CD4-positive, alpha-beta T cell (primary cell): ENCODE measurements at regions of chr16 and their contacts with region 1.

Region 1: GRCh38 chr16:23595951-23596720 is at the start of gene NDUFAB1:
- DNase-seq: peak; percentile 81 to 95 (median 90)
- ATAC-seq: peak; percentile 99
- H3K4me3 ChIP-seq: peak within 1 kb of the TSS; percentile 76
- H3K4me3 Mint-ChIP-seq: peak within 1 kb of the TSS; percentile 87
- H3K27ac ChIP-seq: peak within 1 kb of the TSS; percentile 54 to 59
- H3K27ac Mint-ChIP-seq: peak within 1 kb of the TSS; percentile 73
- H3K4me1 ChIP-seq: peaks cover 33% of the 10 kb centered on the region
- H3K4me1 Mint-ChIP-seq: peaks cover 35% of the 10 kb centered on the region
- H3K27me3 ChIP-seq: no peaks in the 10 kb centered on the region
- H3K27me3 Mint-ChIP-seq: no peaks in the 10 kb centered on the region
- CTCF ChIP-seq: peak; percentile 99
- total RNA-seq, gene NDUFAB1: 23.0 to 28.3 TPM

Region 2: GRCh38 chr16:23510164-23510914 is 85.8 kb before region 1 on chr16 and contains the start of gene GGA2:
- CTCF ChIA-PET with region 1: interaction called, 3 read pairs
- POLR2A ChIA-PET with region 1: no interaction called
- intact Hi-C with region 1: loop called in 1 of 2 experiments (anchors 2 kb)
- DNase-seq: peak; percentile 65 to 90 (median 74)
- ATAC-seq: peak; percentile 86
- H3K4me3 ChIP-seq: peak within 1 kb of the TSS; percentile 66
- H3K4me3 Mint-ChIP-seq: peak within 1 kb of the TSS; percentile 99
- H3K27ac ChIP-seq: peak within 1 kb of the TSS in 1 of 2 donors; percentile 13
- H3K27ac Mint-ChIP-seq: peak within 1 kb of the TSS; percentile 84
- H3K4me1 ChIP-seq: peaks cover 63% of the 10 kb centered on the region
- H3K4me1 Mint-ChIP-seq: peaks cover 58% of the 10 kb centered on the region
- H3K27me3 ChIP-seq: no peaks in the 10 kb centered on the region
- H3K27me3 Mint-ChIP-seq: no peaks in the 10 kb centered on the region
- CTCF ChIP-seq: no peak
- total RNA-seq, gene GGA2: 96.5 to 96.9 TPM

Region 3: GRCh38 chr16:23567602-23568001 is 28.5 kb before region 1 on chr16:
- CTCF ChIA-PET with region 1: no interaction called
- POLR2A ChIA-PET with region 1: no interaction called
- intact Hi-C with region 1: no loop called
- DNase-seq: no peak
- ATAC-seq: no peak
- H3K4me3 ChIP-seq: no peak overlapping the region
- H3K4me3 Mint-ChIP-seq: no peak overlapping the region
- H3K27ac ChIP-seq: no peak overlapping the region
- H3K27ac Mint-ChIP-seq: no peak overlapping the region
- H3K4me1 ChIP-seq: no peaks in the 10 kb centered on the region
- H3K4me1 Mint-ChIP-seq: no peaks in the 10 kb centered on the region
- H3K27me3 ChIP-seq: no peaks in the 10 kb centered on the region
- H3K27me3 Mint-ChIP-seq: no peaks in the 10 kb centered on the region
- CTCF ChIP-seq: no peak

Region 4: GRCh38 chr16:23640931-23641765 is 45.0 kb after region 1 on chr16 and contains the starts of genes DCTN5 and PALB2:
- CTCF ChIA-PET with region 1: interaction called, 7 read pairs
- POLR2A ChIA-PET with region 1: interaction called, 4 read pairs
- intact Hi-C with region 1: loop called in 1 of 2 experiments (anchors 2 kb)
- DNase-seq: peak; percentile 61 to 93 (median 78)
- ATAC-seq: peak; percentile 90
- H3K4me3 ChIP-seq: peak within 1 kb of the TSS; percentile 93
- H3K4me3 Mint-ChIP-seq: peak within 1 kb of the TSS; percentile 99
- H3K27ac ChIP-seq: peak within 1 kb of the TSS; percentile 70 to 75
- H3K27ac Mint-ChIP-seq: peak within 1 kb of the TSS; percentile 96
- H3K4me1 ChIP-seq: peaks cover 21% of the 10 kb centered on the region
- H3K4me1 Mint-ChIP-seq: peaks cover 40% of the 10 kb centered on the region
- H3K27me3 ChIP-seq: no peaks in the 10 kb centered on the region
- H3K27me3 Mint-ChIP-seq: no peaks in the 10 kb centered on the region
- CTCF ChIP-seq: no peak
- total RNA-seq, gene DCTN5: 46.9 to 47.8 TPM
- total RNA-seq, gene PALB2: 3.8 to 5.1 TPM